Pancreas (tissue), 10 donors: ENCODE measurements at regions of chr3 and their contacts with region 1.

Region 1: GRCh38 chr3:42772670-42773408 is at the start of gene CCDC13:
- DNase-seq: peak; percentile 92 to 96 (median 94)
- ATAC-seq: peak; percentile 94 to 98 (median 97)
- H3K4me3 ChIP-seq: peak within 1 kb of the TSS; percentile 21 to 51 (median 33)
- H3K27ac ChIP-seq: peak within 1 kb of the TSS; percentile 1 to 70 (median 56)
- H3K4me1 ChIP-seq: no peaks in the 10 kb centered on the region
- H3K27me3 ChIP-seq: no peaks in the 10 kb centered on the region
- CTCF ChIP-seq: no peak
- total RNA-seq, gene CCDC13: 0.18 to 1.0 (median 0.69) TPM

Region 2: GRCh38 chr3:42451546-42452230 is 321.2 kb before region 1 on chr3:
- intact Hi-C with region 1: no loop called
- DNase-seq: no peak
- ATAC-seq: peak in 1 of 4 donors; percentile 36
- H3K4me3 ChIP-seq: no peak overlapping the region
- H3K27ac ChIP-seq: no peak overlapping the region
- H3K4me1 ChIP-seq: no peaks in the 10 kb centered on the region
- H3K27me3 ChIP-seq: no peaks in the 10 kb centered on the region
- CTCF ChIP-seq: no peak

Region 3: DNA sequence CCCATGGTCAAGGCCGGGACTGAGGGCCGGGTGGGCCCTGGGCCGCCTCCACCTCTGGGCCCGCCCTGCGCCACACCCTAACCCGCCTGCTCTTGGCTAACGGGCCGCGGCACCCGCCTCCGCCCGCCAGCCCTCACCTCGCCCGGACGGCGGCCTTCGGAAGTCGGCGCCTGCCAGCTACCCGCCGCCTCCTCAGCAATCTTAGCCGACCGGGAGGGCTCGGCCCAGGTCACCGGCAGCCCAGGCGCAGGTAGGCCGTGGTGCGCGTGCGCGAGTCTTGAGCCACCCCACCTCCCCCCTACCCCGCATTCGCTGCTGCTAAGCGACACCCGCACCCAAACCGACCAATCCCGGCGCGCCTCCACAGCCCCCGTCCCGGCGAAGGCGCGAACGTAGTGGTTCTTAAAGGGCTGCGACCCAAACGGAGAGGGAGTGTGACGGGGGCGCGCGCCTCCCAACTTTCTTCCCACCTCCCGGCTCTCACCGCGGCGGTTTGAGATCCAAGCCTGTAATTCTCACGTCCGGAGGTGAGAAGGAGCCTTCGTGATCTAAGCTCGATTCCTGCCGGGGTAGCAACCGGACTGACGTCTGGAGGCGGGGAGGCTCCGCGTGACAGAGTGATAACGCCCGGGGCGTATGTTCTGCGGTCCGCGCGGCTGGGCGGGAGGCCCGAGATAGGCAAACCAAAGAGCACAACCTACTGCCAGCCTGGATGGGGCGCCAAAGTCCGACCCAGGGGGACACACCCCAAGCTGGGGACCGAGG is 190.9 kb before region 1 on chr3 and contains the start of gene SEC22C:
- intact Hi-C with region 1: no loop called
- DNase-seq: peak; percentile 96 to 99 (median 97)
- ATAC-seq: peak; percentile 95 to 99 (median 98)
- H3K4me3 ChIP-seq: peak within 1 kb of the TSS; percentile 71 to 95 (median 86)
- H3K27ac ChIP-seq: peak within 1 kb of the TSS; percentile 72 to 84 (median 81)
- H3K4me1 ChIP-seq: peaks cover 3 to 11% (median 9%) of the 10 kb centered on the region in 3 donors
- H3K27me3 ChIP-seq: no peaks in the 10 kb centered on the region
- CTCF ChIP-seq: no peak
- total RNA-seq, gene SEC22C: 19.5 to 26.1 (median 21.7) TPM

Region 4: GRCh38 chr3:42880601-42881451 is 108.0 kb after region 1 on chr3:
- intact Hi-C with region 1: loop called in 1 of 3 experiments (anchors 10 kb)
- DNase-seq: peak; percentile 78 to 96 (median 86)
- ATAC-seq: peak; percentile 99 to 100 (median 100)
- H3K4me3 ChIP-seq: peak overlapping the region; percentile 52 to 77 (median 66)
- H3K27ac ChIP-seq: no peak overlapping the region
- H3K4me1 ChIP-seq: peaks cover 0 to 3% (median 0%) of the 10 kb centered on the region in 3 donors
- H3K27me3 ChIP-seq: no peaks in the 10 kb centered on the region
- CTCF ChIP-seq: peak; percentile 86 to 95 (median 94)

Region 5: DNA sequence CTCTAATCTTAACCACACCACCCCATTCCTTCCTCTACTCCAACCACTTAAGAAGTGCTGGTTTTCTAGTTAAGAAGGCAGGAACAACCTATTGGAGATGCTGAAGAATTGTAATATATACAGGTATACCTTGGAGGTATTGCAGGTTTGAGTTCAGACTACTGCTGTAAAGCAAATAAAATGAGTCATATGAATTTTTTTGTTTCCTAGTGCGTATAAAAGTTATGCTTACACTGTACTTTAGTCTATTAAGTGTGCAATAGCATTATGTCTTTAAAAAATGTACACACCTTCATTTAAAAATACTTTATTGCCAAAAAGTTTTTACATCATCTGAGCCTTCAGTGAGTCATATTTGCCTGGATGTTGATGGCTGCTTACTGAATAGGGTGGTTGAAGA is 1491.3 kb after region 1 on chr3:
- intact Hi-C with region 1: no loop called
- DNase-seq: no peak
- ATAC-seq: no peak
- H3K4me3 ChIP-seq: no peak overlapping the region
- H3K27ac ChIP-seq: no peak overlapping the region
- H3K4me1 ChIP-seq: no peaks in the 10 kb centered on the region
- H3K27me3 ChIP-seq: no peaks in the 10 kb centered on the region
- CTCF ChIP-seq: no peak